Head of caudate nucleus (tissue), 42 donors: ENCODE measurements at regions of chr2 and their contacts with region 1.

Region 1: GRCh38 chr2:169741-170140 is 94.1 kb downstream of the SH3YL1 start:
- DNase-seq: no peak

Region 2: GRCh38 chr2:69366-70344 is 100.1 kb before region 1 on chr2:
- intact Hi-C with region 1: no loop called
- DNase-seq: peak in 1 of 42 donors; percentile 27

Region 3: DNA sequence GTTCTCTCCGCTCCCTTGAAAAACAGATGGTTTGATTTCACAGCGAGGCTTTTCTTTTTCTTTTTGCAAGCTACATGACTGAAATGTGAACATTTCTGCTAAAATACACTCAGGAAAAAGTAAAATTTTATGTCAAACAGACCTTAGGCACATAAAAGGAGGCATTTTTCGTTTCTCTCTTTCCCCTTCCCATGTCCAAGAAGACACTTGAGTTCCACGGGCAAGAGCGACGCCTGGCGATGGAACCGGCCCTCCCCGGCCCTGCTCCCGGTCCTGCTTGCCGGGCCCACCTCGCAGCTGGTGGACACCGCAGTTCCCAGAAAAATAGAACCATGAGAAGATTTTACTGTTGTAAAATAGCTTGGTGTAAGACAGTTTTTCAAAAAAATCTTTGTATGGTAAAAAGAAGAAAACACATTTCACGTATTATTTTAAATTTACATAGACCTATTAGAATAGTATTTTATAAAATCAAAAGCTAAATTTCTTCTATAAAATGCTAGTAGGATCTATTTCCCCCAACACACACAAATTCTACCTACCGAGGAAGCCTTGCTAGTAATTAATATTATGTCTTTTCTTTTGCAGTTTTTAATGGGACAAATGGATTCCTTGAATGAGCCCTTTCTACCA is 120.5 kb after region 1 on chr2:
- intact Hi-C with region 1: loop called (anchors 5 kb)
- DNase-seq: peak; percentile 70 to 94 (median 88)

Region 4: GRCh38 chr2:406876-407275 is 237.1 kb after region 1 on chr2:
- intact Hi-C with region 1: no loop called
- DNase-seq: peak in 1 of 42 donors; percentile 5

Region 5: GRCh38 chr2:419687-420317 is 250.1 kb after region 1 on chr2:
- intact Hi-C with region 1: no loop called
- DNase-seq: peak in 1 of 42 donors; percentile 4